A549 (cell line): ENCODE measurements at regions of chr10 and their contacts with region 1.

Region 1: DNA sequence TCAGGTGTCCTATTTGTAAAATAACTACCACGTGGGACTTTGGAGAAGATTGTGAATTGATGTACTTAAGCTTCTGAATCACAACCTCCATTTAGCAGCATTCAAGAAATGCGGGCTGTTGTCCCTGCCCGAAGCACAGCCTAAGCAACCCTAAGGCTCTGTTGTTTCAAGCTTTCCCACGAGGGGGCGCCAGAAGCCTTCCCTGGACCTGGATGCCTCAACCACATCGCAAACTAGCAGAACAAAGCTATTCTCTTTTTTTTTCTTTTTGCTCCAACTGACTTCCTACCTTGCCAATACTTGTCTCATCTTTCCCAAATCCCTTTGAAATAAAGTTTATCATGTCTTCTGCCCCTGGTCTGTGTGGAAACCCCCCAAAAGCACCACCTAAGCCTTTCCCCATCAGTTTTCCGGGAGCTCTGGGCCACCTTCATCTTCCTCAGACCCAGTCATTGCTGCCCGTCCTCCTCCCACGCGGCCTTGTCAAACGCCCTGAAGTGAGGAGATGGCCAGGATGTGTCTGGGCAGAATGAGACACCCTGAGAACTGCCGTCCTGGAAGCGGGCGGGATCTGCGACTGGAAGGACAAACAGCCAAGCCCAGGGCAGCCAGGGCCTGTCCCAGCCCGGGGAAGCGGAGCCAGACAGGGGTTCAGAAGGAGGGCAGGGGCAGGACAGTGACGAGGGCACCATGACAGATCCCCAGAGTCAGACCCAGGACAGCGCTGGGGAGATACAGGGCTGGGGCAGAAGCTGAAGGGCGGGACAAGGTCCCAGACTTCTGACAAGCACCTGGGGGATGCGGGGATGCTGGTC is 112.7 kb downstream of the SLIT1 start:
- DNase-seq: peak; percentile 69 to 72
- ATAC-seq: peak; percentile 70 to 90
- H3K4me3 ChIP-seq: no peak overlapping the region
- H3K27ac ChIP-seq: no peak overlapping the region
- H3K4me1 ChIP-seq: peaks cover 19% of the 10 kb centered on the region
- CTCF ChIP-seq: peak; percentile 91
- EP300 ChIP-seq: no peak
- POLR2A ChIP-seq: no peak
- RAD21 ChIP-seq: peak; percentile 92

Region 2: DNA sequence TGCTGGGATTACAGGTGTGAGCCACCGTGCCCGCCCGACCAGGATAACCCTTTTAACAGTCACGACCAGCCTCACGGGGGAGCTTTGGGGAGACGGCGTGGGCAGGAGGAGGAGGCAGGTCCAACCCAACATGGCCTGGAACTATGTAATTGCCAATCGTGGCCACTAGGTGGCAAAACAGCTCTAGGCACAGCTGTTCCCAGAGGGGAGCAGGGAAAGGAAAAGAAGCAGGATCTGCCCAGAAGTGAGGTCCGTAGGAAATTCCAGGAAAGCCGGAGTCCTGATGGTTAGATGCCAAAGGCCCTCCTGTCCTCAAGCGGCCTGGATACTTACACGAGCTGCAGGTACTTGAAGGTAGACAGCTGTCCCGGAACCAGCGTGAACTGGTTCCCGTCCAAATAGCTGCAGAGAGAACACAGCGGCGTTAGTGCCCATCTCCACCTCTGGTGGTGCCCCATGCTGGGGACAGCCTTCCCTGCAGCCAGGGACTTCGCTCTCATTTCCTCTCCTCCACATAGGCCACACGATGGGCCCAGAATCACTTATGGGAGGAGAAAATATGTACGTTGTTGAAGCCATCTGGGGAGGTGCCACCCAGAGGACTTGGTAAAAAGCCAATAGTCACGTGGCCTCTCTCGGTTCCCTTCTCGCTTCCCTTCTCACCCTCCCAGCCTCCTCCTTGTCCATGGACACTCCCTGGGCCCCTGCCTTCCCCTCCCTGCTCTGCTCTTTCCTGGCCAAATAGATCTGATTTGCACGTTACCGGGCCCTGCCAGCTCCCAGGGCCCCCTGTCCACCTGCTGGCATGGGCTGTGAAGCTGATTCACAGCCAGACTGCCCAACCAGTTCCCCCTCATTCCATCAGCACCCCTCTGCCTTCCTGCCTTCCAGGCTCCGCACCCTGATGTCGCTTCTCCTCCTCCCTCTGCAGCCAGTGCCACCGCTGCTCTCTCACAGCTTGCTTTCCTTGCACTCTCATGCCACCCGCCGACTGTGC is 35.4 kb before region 1 on chr10:
- CTCF ChIA-PET with region 1: interaction called, 64 read pairs
- POLR2A ChIA-PET with region 1: no interaction called
- DNase-seq: peak; percentile 85 to 87
- ATAC-seq: peak; percentile 90 to 98
- H3K4me3 ChIP-seq: peak overlapping the region; percentile 33
- H3K27ac ChIP-seq: peak overlapping the region; percentile 58 to 64
- H3K4me1 ChIP-seq: no peaks in the 10 kb centered on the region
- CTCF ChIP-seq: peak; percentile 86
- EP300 ChIP-seq: no peak
- POLR2A ChIP-seq: no peak
- RAD21 ChIP-seq: peak; percentile 81 to 84

Region 3: GRCh38 chr10:97059006-97059871 is 13.8 kb before region 1 on chr10:
- CTCF ChIA-PET with region 1: interaction called, 33 read pairs
- POLR2A ChIA-PET with region 1: no interaction called
- DNase-seq: no peak
- ATAC-seq: peak in 1 of 2 experiments; percentile 57; a peak in 4 of 6 replicates
- H3K4me3 ChIP-seq: no peak overlapping the region
- H3K27ac ChIP-seq: no peak overlapping the region
- H3K4me1 ChIP-seq: peaks cover 5% of the 10 kb centered on the region; the same call in 2 of the 3 replicates
- CTCF ChIP-seq: no peak
- EP300 ChIP-seq: no peak
- POLR2A ChIP-seq: no peak
- RAD21 ChIP-seq: no peak

Region 4: DNA sequence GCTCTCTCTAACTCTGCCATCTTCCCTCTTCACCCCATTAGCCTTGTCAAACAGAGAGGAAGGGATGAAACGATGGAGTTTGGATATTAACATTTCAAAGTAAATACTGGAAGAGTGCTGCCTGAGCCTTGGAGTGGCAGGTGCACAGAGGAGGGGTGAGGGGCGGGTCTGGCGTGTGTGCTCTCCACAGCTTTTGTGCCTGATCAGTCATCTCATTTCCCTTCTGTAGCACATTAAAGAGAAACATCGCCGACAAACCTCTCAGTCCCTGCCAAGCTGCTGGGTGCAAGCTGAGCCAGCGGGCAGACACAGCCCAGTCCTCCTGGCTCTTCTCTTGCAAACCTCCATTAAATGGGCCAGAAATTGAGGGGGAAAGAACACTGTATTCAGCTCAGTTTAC is 36.5 kb after region 1 on chr10:
- CTCF ChIA-PET with region 1: interaction called, 80 read pairs
- POLR2A ChIA-PET with region 1: no interaction called
- DNase-seq: no peak
- ATAC-seq: no peak
- H3K4me3 ChIP-seq: no peak overlapping the region
- H3K27ac ChIP-seq: no peak overlapping the region
- H3K4me1 ChIP-seq: no peaks in the 10 kb centered on the region
- CTCF ChIP-seq: no peak
- EP300 ChIP-seq: no peak
- POLR2A ChIP-seq: no peak
- RAD21 ChIP-seq: no peak

Region 5: DNA sequence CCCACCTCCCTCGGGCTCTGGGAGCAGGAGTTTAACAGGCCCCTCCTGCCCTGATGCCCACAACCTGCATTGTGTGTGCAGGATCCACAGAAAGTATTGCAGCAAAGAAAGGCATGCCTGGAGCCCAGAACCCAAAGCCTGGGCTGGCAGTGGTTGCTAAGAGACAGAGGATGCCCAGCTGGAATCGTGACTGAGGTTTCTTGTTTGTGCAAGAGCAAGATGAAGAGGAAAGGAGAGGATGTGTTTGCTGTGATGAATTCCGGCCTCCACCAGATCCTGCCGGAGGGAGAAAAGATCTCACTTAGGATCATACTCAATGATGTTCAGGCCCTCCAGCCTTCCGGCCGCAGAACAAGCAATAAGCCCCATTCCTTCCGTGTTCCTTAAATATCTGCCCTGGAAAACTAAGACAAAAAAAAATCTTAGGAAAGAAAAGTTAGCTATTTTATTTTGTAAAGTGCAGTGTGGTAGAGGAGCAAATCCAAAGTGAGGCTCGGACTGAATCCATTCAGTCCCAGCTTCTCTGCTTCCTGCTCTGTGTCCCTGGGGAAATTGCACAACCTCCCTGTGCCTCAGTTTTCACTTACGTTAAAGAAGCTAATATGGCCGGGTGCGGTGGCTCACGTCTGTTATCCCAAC is 55.6 kb after region 1 on chr10:
- CTCF ChIA-PET with region 1: interaction called, 19 read pairs
- POLR2A ChIA-PET with region 1: no interaction called
- DNase-seq: no peak
- ATAC-seq: no peak
- H3K4me3 ChIP-seq: no peak overlapping the region
- H3K27ac ChIP-seq: no peak overlapping the region
- H3K4me1 ChIP-seq: no peaks in the 10 kb centered on the region
- CTCF ChIP-seq: no peak
- EP300 ChIP-seq: no peak
- POLR2A ChIP-seq: no peak
- RAD21 ChIP-seq: no peak

Region 6: DNA sequence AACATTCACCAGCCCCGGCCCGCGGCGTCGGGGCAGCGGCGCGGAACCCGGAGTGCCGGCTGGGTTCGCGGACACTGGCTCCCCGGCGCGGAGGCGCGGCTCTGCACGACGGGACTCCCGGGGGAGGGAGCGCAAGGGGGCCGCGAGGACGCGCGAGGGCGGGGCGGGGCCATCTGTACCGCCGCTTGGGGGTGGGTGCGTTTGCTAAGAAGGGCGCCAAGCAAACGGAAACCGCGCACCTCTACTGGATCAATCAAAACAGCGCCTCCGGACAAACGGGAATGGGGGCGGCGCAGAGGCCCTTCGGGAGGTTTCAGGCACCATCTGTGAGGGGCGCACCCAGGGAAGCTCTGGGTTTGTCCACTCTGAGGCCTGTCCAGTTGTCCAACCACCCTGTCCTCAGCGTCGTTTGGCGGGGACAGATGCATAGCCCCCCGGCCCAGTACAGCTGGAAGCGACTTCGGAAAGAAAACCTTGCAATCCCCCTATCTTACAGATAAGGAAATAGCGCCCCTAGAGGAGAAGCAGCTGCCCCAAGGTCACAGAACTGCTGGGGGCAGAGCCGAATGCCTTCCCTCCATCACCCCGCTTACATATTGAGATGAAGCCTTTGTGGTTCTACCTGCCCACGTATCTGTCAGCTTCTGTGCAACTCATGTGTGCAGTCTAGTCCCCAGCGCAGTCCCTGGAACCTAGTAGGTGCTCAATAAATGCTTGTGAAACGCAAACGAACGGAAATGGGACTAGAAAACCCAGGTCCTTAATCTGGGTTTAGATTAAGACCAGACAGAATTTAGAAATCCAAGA is 123.4 kb after region 1 on chr10:
- CTCF ChIA-PET with region 1: interaction called, 779 read pairs
- POLR2A ChIA-PET with region 1: no interaction called
- DNase-seq: peak; percentile 67 to 78
- ATAC-seq: peak; percentile 92 to 94
- H3K4me3 ChIP-seq: peak overlapping the region; percentile 58
- H3K27ac ChIP-seq: peak overlapping the region; percentile 51 to 79; a peak in 5 of 6 replicates
- H3K4me1 ChIP-seq: no peaks in the 10 kb centered on the region
- CTCF ChIP-seq: peak; percentile 88
- EP300 ChIP-seq: no peak
- POLR2A ChIP-seq: no peak
- RAD21 ChIP-seq: peak; percentile 54 to 62

Region 7: GRCh38 chr10:97234400-97234799 is 161.3 kb after region 1 on chr10:
- CTCF ChIA-PET with region 1: interaction called, 92 read pairs
- POLR2A ChIA-PET with region 1: no interaction called
- DNase-seq: peak; percentile 13 to 51
- ATAC-seq: peak; percentile 54 to 58; a peak in 3 of 6 replicates
- H3K4me3 ChIP-seq: no peak overlapping the region
- H3K27ac ChIP-seq: no peak overlapping the region
- H3K4me1 ChIP-seq: peaks cover 12% of the 10 kb centered on the region
- CTCF ChIP-seq: peak; percentile 70
- EP300 ChIP-seq: no peak
- POLR2A ChIP-seq: no peak
- RAD21 ChIP-seq: peak; percentile 71